Heart left ventricle (tissue), 16 donors: ENCODE measurements at regions of chr4 and their contacts with region 1.

Region 1: DNA sequence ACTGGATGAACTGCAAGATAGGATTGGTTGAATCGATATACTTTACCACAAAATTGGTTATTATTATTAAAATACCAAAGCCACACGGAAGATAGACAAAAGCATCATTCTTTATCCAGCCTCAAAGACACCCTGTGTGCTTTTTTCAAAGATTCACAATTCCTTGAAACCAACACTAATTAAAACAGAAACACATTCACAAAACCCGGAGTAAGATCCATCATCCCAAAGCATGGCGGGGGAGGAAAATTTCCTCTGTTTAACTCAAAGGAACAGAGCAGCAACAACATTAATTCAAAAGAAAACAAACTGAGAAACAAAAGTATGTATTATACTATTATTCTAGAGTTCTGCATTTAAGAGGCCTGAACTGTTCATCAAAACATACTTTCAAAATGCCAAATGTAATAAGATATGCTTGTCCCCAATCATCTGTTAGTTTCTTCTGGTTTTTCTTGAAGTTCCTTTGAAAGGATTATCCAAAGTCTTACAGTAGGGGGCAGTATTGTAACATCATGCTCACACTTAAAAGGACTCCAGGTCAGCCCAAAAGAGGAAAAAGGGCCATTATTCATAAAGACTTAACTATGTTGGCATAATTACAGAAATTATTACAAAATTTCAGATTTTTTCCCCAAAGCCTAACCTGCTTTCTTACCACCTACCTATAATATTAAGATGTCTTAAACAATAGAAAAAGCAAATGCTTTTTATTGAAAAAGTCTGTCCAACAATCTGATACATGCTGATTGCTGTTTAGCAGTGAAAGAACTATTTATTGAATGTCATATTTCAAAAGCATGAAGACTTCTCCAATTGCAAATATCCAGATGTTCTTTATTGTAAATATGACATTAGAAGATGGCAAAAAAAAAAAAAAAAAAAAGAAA is 168.7 kb downstream of the SCFD2 start:
- DNase-seq: no peak
- ATAC-seq: peak in 2 of 4 donors; percentile 45 to 63
- H3K4me3 ChIP-seq: no peak overlapping the region
- H3K27ac ChIP-seq: no peak overlapping the region
- H3K4me1 ChIP-seq: peaks cover 0 to 11% (median 0%) of the 10 kb centered on the region in 12 donors
- H3K27me3 ChIP-seq: no peaks in the 10 kb centered on the region
- CTCF ChIP-seq: peak; percentile 67 to 89 (median 79)
- POLR2A ChIP-seq: no peak

Region 2: GRCh38 chr4:53055274-53055673 is 141.9 kb before region 1 on chr4:
- intact Hi-C with region 1: no loop called
- DNase-seq: no peak
- ATAC-seq: no peak
- H3K4me3 ChIP-seq: no peak overlapping the region
- H3K27ac ChIP-seq: peak overlapping the region in 1 of 12 donors; percentile 16
- H3K4me1 ChIP-seq: peaks cover 0 to 20% (median 5%) of the 10 kb centered on the region in 12 donors
- H3K27me3 ChIP-seq: no peaks in the 10 kb centered on the region
- CTCF ChIP-seq: no peak
- POLR2A ChIP-seq: no peak

Region 3: GRCh38 chr4:53161051-53161786 is 35.9 kb before region 1 on chr4:
- intact Hi-C with region 1: no loop called
- DNase-seq: no peak
- ATAC-seq: no peak
- H3K4me3 ChIP-seq: no peak overlapping the region
- H3K27ac ChIP-seq: peak overlapping the region in 3 of 12 donors; percentile 8 to 36 (median 15)
- H3K4me1 ChIP-seq: peaks cover 0 to 21% (median 0%) of the 10 kb centered on the region in 12 donors
- H3K27me3 ChIP-seq: no peaks in the 10 kb centered on the region
- CTCF ChIP-seq: no peak
- POLR2A ChIP-seq: no peak

Region 4: DNA sequence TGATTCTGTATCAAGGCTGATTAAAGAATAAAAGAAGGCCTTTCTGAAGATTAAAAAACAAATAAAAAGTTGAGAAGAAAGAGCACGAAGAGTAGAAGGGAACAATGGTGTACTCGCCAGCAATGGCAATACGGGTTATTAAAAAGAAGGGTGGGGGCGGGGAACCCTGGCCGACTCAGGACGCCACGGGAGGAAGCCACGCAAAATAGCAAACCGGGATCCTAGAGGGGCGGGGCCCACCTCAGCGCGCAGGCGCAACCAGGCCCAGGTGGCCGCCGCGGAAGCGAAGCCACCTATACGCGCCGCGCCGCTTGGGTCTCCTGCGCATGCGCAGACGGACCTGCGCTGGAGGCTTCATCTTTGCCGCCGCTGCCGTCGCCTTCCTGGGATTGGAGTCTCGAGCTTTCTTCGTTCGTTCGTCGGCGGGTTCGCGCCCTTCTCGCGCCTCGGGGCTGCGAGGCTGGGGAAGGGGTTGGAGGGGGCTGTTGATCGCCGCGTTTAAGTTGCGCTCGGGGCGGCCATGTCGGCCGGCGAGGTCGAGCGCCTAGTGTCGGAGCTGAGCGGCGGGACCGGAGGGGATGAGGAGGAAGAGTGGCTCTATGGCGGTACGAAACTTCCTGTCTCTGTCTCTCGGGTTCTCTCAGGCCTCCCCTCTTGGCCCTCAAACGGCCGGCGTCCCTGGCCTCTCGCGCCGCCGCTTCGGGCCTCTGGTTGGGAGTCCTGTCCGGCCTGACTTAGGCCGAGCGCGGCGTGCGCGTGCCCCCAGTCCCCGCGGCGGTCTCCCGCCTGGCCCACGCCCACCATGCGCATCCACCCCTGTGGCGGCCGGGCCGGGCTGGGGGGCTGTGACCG is 180.4 kb after region 1 on chr4 and contains the start of gene FIP1L1:
- intact Hi-C with region 1: loop called in 1 of 10 experiments (anchors 10 kb)
- DNase-seq: peak; percentile 93 to 98 (median 96)
- ATAC-seq: peak; percentile 99 to 100 (median 100)
- H3K4me3 ChIP-seq: peak within 1 kb of the TSS; percentile 50 to 97 (median 88)
- H3K27ac ChIP-seq: peak within 1 kb of the TSS; percentile 73 to 94 (median 90)
- H3K4me1 ChIP-seq: peaks cover 0 to 26% (median 20%) of the 10 kb centered on the region in 12 donors
- H3K27me3 ChIP-seq: no peaks in the 10 kb centered on the region
- CTCF ChIP-seq: no peak
- POLR2A ChIP-seq: peak in 1 of 2 donors; percentile 77
- total RNA-seq, gene FIP1L1: 23.5 to 46.2 (median 32.8) TPM

Region 5: DNA sequence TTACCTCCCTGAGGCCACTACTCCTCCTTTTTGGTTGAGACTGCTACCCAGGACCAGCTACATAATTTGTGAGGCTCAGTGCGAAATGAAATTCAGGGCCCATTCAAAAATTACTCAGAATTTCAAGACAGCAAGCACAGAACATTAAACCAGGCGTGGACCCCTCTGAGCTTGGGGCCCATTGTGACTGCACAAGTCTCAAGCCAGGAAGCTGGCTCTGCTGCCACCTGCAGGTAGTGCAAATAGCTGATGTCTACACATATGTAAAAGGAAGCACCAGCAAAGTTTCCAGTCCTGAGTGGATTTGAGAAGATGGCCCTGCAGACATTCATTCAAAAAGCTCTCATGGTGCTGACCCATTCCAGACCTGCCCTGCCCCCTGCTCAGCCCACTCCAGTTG is 607.6 kb after region 1 on chr4:
- intact Hi-C with region 1: loop called in 2 of 10 experiments (anchors 10 kb)
- DNase-seq: peak in 1 of 5 donors; percentile 32
- ATAC-seq: peak in 1 of 4 donors; percentile 45
- H3K4me3 ChIP-seq: no peak overlapping the region
- H3K27ac ChIP-seq: no peak overlapping the region
- H3K4me1 ChIP-seq: peaks cover 0 to 3% (median 0%) of the 10 kb centered on the region in 12 donors
- H3K27me3 ChIP-seq: peaks cover 0 to 1% (median 0%) of the 10 kb centered on the region in 9 donors
- CTCF ChIP-seq: peak in 11 of 12 donors; percentile 23 to 47 (median 34)
- POLR2A ChIP-seq: no peak

Region 6: DNA sequence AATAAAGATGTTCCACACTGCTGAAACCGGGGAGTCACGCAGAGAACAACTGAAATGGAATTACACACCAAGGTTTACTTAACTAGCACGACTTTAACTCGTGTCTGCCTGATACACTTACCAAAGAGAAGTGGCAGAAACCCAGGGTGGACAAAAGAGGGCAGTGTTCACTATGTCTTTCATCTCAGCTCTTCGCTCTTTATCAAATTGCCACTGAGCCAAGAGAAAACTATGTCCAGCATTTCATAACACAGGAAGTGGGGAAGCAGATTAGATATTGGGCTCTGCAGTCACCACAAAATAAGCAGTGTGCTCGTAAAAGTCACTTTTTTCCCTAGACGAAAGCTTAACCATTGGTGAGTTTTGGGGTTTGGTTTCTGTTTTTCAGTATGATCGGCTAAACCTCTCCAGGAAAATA is 711.5 kb after region 1 on chr4:
- intact Hi-C with region 1: loop called in 6 of 10 experiments (anchors 5 to 10 kb)
- DNase-seq: peak in 3 of 5 donors; percentile 37 to 50 (median 44)
- ATAC-seq: peak; percentile 84 to 94 (median 93)
- H3K4me3 ChIP-seq: peak overlapping the region in 8 of 12 donors; percentile 12 to 42 (median 27)
- H3K27ac ChIP-seq: peak overlapping the region in 8 of 12 donors; percentile 27 to 63 (median 40)
- H3K4me1 ChIP-seq: peaks cover 0 to 37% (median 14%) of the 10 kb centered on the region in 12 donors
- H3K27me3 ChIP-seq: peaks cover 0 to 32% (median 11%) of the 10 kb centered on the region in 9 donors
- CTCF ChIP-seq: peak; percentile 40 to 83 (median 67)
- POLR2A ChIP-seq: no peak

Region 7: GRCh38 chr4:53929955-53930798 is 733.0 kb after region 1 on chr4:
- intact Hi-C with region 1: loop called in 1 of 10 experiments (anchors 10 kb)
- DNase-seq: peak in 4 of 5 donors; percentile 66 to 80 (median 74)
- ATAC-seq: peak; percentile 88 to 94 (median 91)
- H3K4me3 ChIP-seq: no peak overlapping the region
- H3K27ac ChIP-seq: no peak overlapping the region
- H3K4me1 ChIP-seq: peaks cover 0 to 11% (median 0%) of the 10 kb centered on the region in 12 donors
- H3K27me3 ChIP-seq: no peaks in the 10 kb centered on the region
- CTCF ChIP-seq: peak; percentile 59 to 84 (median 71)
- POLR2A ChIP-seq: no peak

Region 8: DNA sequence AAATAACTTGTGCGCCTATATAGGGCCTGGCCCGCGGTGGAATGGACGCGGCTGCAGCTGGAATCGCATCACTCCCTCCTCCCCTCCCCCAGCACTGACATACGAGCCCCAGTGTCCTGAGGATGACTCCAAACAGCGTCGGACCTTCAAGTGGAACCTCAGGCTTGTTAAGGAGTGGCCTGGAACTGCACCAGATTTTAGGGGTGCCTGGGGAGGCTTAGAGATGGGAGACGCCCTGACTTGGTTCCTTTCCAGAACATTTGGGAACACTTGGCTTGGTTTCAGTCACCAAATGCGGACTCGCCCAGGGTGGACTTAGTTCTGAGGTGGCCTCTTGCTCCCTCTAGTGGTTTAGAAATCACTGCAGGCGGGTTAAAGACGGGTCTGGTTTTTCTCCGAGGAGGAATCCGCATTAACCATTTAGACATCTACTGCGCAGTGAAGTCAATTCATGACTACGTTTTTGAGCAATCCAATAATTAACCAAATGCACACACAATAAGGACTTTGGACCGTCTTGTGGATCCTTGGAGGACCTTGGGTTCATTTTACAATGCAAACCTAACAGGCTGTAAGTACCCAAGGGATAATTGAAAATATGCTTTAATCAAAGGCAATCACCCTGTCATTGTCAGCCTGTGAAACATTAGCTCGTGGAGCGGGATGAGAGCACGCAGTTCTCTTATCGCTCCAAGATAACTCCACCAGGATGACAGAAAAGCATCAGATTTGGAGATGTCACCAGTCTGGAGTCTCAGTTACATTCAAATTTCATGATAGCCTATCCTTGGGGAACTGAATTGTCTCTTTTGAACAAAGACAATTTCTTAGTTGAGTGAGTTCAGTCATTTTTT is 1020.7 kb after region 1 on chr4:
- intact Hi-C with region 1: loop called in 3 of 10 experiments (anchors 5 kb)
- DNase-seq: peak; percentile 77 to 83 (median 80)
- ATAC-seq: peak; percentile 77 to 92 (median 92)
- H3K4me3 ChIP-seq: peak overlapping the region in 10 of 12 donors; percentile 28 to 58 (median 48)
- H3K27ac ChIP-seq: peak overlapping the region in 4 of 12 donors; percentile 39 to 41 (median 40)
- H3K4me1 ChIP-seq: peaks cover 0 to 18% (median 5%) of the 10 kb centered on the region in 12 donors
- H3K27me3 ChIP-seq: peaks cover 0 to 41% (median 0%) of the 10 kb centered on the region in 9 donors
- CTCF ChIP-seq: peak; percentile 80 to 97 (median 94)
- POLR2A ChIP-seq: no peak

Region 9: DNA sequence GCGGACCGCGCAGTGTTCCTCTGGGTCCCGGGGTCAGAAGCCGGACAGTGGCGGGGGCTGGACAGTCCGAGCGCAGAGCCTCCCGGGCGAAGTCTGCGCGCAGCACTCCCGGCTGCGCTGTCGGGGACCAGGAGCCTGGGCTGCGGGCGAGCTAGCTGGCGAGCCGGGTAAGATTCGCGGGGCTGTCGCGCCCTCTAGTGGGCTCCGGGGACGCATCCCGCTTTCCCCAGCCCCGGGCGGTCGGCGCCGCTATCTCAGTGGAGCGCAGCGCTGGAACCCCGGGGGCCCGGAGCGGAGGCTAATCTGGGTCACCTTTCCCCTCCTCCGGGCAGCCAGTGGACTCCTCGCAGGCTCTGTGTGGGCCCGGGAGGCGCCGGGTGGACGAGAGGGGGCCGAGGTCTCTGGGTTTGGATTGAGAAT is 1036.2 kb after region 1 on chr4:
- intact Hi-C with region 1: loop called (anchors 1 to 5 kb)
- DNase-seq: peak; percentile 85 to 92 (median 89)
- ATAC-seq: peak; percentile 64 to 88 (median 85)
- H3K4me3 ChIP-seq: peak overlapping the region; percentile 22 to 80 (median 58)
- H3K27ac ChIP-seq: peak overlapping the region in 11 of 12 donors; percentile 19 to 89 (median 68)
- H3K4me1 ChIP-seq: peaks cover 6 to 51% (median 40%) of the 10 kb centered on the region in 12 donors
- H3K27me3 ChIP-seq: peaks cover 26 to 51% (median 43%) of the 10 kb centered on the region in 9 donors
- CTCF ChIP-seq: peak; percentile 67 to 89 (median 80)
- POLR2A ChIP-seq: no peak